ENCODE measurements at regions of chr18 and their contacts with region 1.

Region 1: DNA sequence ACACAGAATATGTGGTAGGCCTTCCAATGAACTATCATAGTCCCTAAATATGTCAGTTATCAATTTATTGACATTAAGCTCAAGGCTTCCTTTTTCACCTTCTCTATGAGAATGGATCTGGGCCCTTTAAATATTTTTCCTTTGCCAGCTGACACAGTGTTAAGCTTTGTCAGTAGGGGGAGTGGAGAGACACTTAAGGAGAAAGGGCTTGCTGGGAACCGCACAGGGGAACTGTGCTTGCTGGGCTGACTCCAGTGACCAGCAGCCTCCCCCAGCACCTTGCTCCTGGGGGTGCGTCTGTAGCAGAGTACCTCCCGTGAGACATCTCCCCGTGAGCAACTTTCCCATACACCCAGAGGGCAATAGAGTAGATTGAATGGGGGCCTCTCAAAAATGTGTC is 6.5 kb upstream of the PTPN2 start:
- DNase-seq: no peak
- ATAC-seq: peak; percentile 32
- H3K4me3 Mint-ChIP-seq: no peak overlapping the region
- H3K27ac Mint-ChIP-seq: no peak overlapping the region
- H3K4me1 Mint-ChIP-seq: peaks cover 8% of the 10 kb centered on the region
- H3K27me3 Mint-ChIP-seq: peaks cover 10% of the 10 kb centered on the region

Region 2: GRCh38 chr18:12744103-12744502 is 146.4 kb before region 1 on chr18:
- CTCF ChIA-PET with region 1: interaction called, 22 read pairs
- DNase-seq: no peak
- ATAC-seq: peak; percentile 73
- H3K4me3 Mint-ChIP-seq: no peak overlapping the region
- H3K27ac Mint-ChIP-seq: no peak overlapping the region
- H3K4me1 Mint-ChIP-seq: peaks cover 5% of the 10 kb centered on the region
- H3K27me3 Mint-ChIP-seq: peaks cover 2% of the 10 kb centered on the region

Measured in activated CD8-positive, alpha-beta memory T cell treated with anti-CD3 and anti-CD28 coated beads, Interleukin-2, amount 10 ng/mL, durations not matched to agents 7 days and 5 days (primary cell).